GM23248 (cell line): ENCODE measurements at regions of chr7 and their contacts with region 1.

Region 1: DNA sequence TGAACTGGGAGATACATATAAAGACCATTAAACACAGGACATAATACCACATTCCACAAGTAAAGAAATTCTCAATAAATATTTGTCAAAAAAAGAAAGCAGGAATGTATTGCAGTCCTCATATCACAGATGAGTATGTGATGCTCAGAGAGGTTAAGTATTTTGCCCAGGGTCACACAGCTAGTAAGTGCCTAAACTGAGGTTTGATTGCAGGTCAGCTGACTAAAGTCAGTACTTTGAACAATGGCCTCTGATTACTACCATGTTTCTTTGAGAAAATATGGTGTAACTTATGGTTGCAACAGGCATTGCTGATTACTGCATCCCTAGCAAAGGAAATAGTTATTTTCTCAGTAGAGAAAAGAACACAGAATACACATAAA is 267.1 kb downstream of the ELMO1 start:
- DNase-seq: no peak
- H3K4me3 ChIP-seq: no peak overlapping the region
- H3K27ac ChIP-seq: no peak overlapping the region
- H3K4me1 ChIP-seq: no peaks in the 10 kb centered on the region
- H3K27me3 ChIP-seq: no peaks in the 10 kb centered on the region; the same call in 1 of the 2 replicates

Region 2: GRCh38 chr7:36986429-36987362 is 194.8 kb before region 1 on chr7:
- in situ Hi-C with region 1: loop called (anchors 10 kb)
- DNase-seq: peak; percentile 61
- H3K4me3 ChIP-seq: no peak overlapping the region
- H3K27ac ChIP-seq: no peak overlapping the region
- H3K4me1 ChIP-seq: no peaks in the 10 kb centered on the region
- H3K27me3 ChIP-seq: peaks cover 30% of the 10 kb centered on the region

Region 3: GRCh38 chr7:37709631-37710509 is 528.3 kb after region 1 on chr7:
- in situ Hi-C with region 1: no loop called
- DNase-seq: no peak
- H3K4me3 ChIP-seq: no peak overlapping the region
- H3K27ac ChIP-seq: no peak overlapping the region
- H3K4me1 ChIP-seq: no peaks in the 10 kb centered on the region
- H3K27me3 ChIP-seq: no peaks in the 10 kb centered on the region